Activated CD4-positive, alpha-beta memory T cell treated with anti-CD3 and anti-CD28 coated beads, Interleukin-2, amount 10 ng/mL, durations not matched to agents 7 days and 5 days (primary cell): ENCODE measurements at regions of chr3 and their contacts with region 1.

Region 1: GRCh38 chr3:58471025-58471887 is 20.6 kb upstream of the KCTD6 start:
- DNase-seq: peak; percentile 75
- H3K4me3 Mint-ChIP-seq: peak overlapping the region; percentile 62
- H3K27ac Mint-ChIP-seq: peak overlapping the region; percentile 89
- H3K4me1 Mint-ChIP-seq: peaks cover 61% of the 10 kb centered on the region
- H3K27me3 Mint-ChIP-seq: no peaks in the 10 kb centered on the region

Region 2: GRCh38 chr3:58484045-58484721 is 12.9 kb after region 1 on chr3:
- CTCF ChIA-PET with region 1: interaction called, 12 read pairs
- POLR2A ChIA-PET with region 1: interaction called, 5 read pairs
- DNase-seq: no peak
- H3K4me3 Mint-ChIP-seq: no peak overlapping the region
- H3K27ac Mint-ChIP-seq: no peak overlapping the region
- H3K4me1 Mint-ChIP-seq: peaks cover 12% of the 10 kb centered on the region
- H3K27me3 Mint-ChIP-seq: peaks cover 45% of the 10 kb centered on the region

Region 3: GRCh38 chr3:58581328-58582091 is 110.3 kb after region 1 on chr3:
- CTCF ChIA-PET with region 1: no interaction called
- POLR2A ChIA-PET with region 1: no interaction called
- DNase-seq: no peak
- H3K4me3 Mint-ChIP-seq: no peak overlapping the region
- H3K27ac Mint-ChIP-seq: no peak overlapping the region
- H3K4me1 Mint-ChIP-seq: peaks cover 17% of the 10 kb centered on the region
- H3K27me3 Mint-ChIP-seq: peaks cover 44% of the 10 kb centered on the region

Region 4: GRCh38 chr3:58591517-58592510 is 120.6 kb after region 1 on chr3:
- CTCF ChIA-PET with region 1: no interaction called
- POLR2A ChIA-PET with region 1: no interaction called
- DNase-seq: no peak
- H3K4me3 Mint-ChIP-seq: no peak overlapping the region
- H3K27ac Mint-ChIP-seq: no peak overlapping the region
- H3K4me1 Mint-ChIP-seq: peaks cover 2% of the 10 kb centered on the region
- H3K27me3 Mint-ChIP-seq: peaks cover 24% of the 10 kb centered on the region